Caco-2 (cell line): ENCODE measurements at regions of chr4 and their contacts with region 1.

Region 1: DNA sequence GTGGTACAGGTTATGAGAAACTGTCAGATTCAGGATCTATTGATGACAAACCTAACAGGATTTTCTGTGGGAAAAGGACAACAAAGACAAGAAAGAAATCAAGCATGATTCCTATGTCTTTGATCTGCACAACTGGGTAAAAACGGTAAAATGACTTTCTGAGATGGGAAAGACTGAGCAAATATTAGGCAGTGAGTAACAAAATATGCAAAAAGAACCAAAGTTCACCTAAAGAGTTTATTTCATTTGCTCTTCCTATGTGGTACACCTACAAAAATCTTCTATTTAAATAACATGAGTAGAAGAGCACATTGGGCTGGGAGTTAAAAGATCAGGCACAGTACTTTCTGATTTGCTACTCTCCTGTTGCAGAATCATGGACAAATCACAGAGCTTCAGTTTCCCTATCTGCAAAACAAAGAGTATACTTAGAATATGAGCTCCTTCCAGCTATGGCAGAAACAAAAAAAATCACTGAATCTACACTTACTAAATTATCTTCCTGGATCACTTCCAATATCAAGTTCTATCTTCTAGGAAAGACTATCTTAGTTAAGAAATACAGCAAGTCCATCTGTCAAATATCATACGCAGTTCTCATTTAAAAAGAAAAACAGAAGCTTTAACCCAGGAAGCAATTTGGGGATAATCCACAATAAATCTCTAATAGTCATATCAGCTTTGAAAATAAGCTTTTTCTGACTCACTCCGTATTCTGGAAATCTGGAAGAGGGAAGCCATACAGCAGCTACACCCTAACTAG is 37.4 kb downstream of the NFXL1 start:
- DNase-seq: no peak
- H3K4me3 ChIP-seq: no peak overlapping the region
- H3K4me3 Mint-ChIP-seq: no peak overlapping the region
- H3K27ac Mint-ChIP-seq: no peak overlapping the region
- H3K4me1 ChIP-seq: 0 out of 2 replicates have a peak, but pooled peaks cover 4% of the 10 kb centered on the region
- H3K4me1 Mint-ChIP-seq: peaks cover 7% of the 10 kb centered on the region
- H3K27me3 ChIP-seq: no peaks in the 10 kb centered on the region
- H3K27me3 Mint-ChIP-seq: no peaks in the 10 kb centered on the region
- CTCF ChIP-seq: no peak

Region 2: DNA sequence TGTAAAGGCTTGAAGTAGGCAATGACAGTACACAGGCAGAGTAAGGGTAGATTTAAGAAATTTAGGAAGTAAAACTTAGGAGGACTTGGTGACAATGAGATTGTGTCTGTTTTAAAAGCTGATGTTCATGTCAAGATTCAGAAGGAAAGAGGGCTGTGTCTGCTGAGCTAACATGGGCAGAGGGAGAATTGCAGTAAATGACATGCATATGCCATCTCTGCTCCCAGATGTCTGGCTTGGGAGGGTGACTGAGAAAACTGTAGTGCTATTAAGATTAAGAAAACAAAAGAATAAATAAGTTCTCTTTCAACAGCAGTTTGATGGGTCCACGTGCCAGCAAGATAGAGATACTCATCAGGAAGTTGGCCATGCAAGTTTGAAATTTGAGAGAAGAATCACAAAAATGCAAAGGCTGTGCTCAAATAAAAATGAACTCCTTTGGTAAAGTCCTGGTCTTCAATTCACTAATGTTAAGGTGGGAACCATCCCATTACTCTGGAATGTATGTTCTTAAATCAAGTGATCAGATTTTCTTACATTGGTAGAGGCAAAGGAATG is 30.2 kb after region 1 on chr4:
- CTCF ChIA-PET with region 1: no interaction called
- POLR2A ChIA-PET with region 1: no interaction called
- intact Hi-C with region 1: loop called (anchors 5 kb)
- DNase-seq: no peak
- H3K4me3 ChIP-seq: no peak overlapping the region
- H3K4me3 Mint-ChIP-seq: no peak overlapping the region
- H3K27ac Mint-ChIP-seq: no peak overlapping the region
- H3K4me1 ChIP-seq: peaks cover 7% of the 10 kb centered on the region
- H3K4me1 Mint-ChIP-seq: no peaks in the 10 kb centered on the region
- H3K27me3 ChIP-seq: no peaks in the 10 kb centered on the region
- H3K27me3 Mint-ChIP-seq: no peaks in the 10 kb centered on the region
- CTCF ChIP-seq: no peak

Region 3: GRCh38 chr4:47926639-47927258 is 49.8 kb after region 1 on chr4:
- CTCF ChIA-PET with region 1: no interaction called
- POLR2A ChIA-PET with region 1: no interaction called
- intact Hi-C with region 1: loop called (anchors 5 kb)
- DNase-seq: peak; percentile 81 to 85
- H3K4me3 ChIP-seq: peak overlapping the region; percentile 44
- H3K4me3 Mint-ChIP-seq: peak overlapping the region; percentile 90
- H3K27ac Mint-ChIP-seq: peak overlapping the region; percentile 83
- H3K4me1 ChIP-seq: peaks cover 10% of the 10 kb centered on the region
- H3K4me1 Mint-ChIP-seq: no peaks in the 10 kb centered on the region
- H3K27me3 ChIP-seq: no peaks in the 10 kb centered on the region
- H3K27me3 Mint-ChIP-seq: no peaks in the 10 kb centered on the region
- CTCF ChIP-seq: peak; percentile 72 to 80

Region 4: GRCh38 chr4:47972181-47972580 is 95.2 kb after region 1 on chr4:
- CTCF ChIA-PET with region 1: no interaction called
- POLR2A ChIA-PET with region 1: no interaction called
- intact Hi-C with region 1: no loop called
- DNase-seq: no peak
- H3K4me3 ChIP-seq: no peak overlapping the region
- H3K4me3 Mint-ChIP-seq: no peak overlapping the region
- H3K27ac Mint-ChIP-seq: no peak overlapping the region
- H3K4me1 ChIP-seq: no peaks in the 10 kb centered on the region
- H3K4me1 Mint-ChIP-seq: no peaks in the 10 kb centered on the region
- H3K27me3 ChIP-seq: no peaks in the 10 kb centered on the region
- H3K27me3 Mint-ChIP-seq: no peaks in the 10 kb centered on the region
- CTCF ChIP-seq: no peak